Left lung (tissue), 14 donors: ENCODE measurements at regions of chr2 and their contacts with region 1.

Region 1: GRCh38 chr2:69306822-69307578 is 80.0 kb downstream of the GFPT1 start:
- DNase-seq: peak; percentile 81 to 93 (median 89)
- ATAC-seq: peak; percentile 84
- H3K4me3 ChIP-seq: peak overlapping the region; percentile 55 to 61
- H3K27ac ChIP-seq: peak overlapping the region; percentile 66 to 83
- H3K4me1 ChIP-seq: peaks cover 21 to 39% of the 10 kb centered on the region in 2 donors
- H3K27me3 ChIP-seq: peaks cover 0 to 23% of the 10 kb centered on the region in 2 donors
- CTCF ChIP-seq: peak; percentile 83 to 88

Region 2: DNA sequence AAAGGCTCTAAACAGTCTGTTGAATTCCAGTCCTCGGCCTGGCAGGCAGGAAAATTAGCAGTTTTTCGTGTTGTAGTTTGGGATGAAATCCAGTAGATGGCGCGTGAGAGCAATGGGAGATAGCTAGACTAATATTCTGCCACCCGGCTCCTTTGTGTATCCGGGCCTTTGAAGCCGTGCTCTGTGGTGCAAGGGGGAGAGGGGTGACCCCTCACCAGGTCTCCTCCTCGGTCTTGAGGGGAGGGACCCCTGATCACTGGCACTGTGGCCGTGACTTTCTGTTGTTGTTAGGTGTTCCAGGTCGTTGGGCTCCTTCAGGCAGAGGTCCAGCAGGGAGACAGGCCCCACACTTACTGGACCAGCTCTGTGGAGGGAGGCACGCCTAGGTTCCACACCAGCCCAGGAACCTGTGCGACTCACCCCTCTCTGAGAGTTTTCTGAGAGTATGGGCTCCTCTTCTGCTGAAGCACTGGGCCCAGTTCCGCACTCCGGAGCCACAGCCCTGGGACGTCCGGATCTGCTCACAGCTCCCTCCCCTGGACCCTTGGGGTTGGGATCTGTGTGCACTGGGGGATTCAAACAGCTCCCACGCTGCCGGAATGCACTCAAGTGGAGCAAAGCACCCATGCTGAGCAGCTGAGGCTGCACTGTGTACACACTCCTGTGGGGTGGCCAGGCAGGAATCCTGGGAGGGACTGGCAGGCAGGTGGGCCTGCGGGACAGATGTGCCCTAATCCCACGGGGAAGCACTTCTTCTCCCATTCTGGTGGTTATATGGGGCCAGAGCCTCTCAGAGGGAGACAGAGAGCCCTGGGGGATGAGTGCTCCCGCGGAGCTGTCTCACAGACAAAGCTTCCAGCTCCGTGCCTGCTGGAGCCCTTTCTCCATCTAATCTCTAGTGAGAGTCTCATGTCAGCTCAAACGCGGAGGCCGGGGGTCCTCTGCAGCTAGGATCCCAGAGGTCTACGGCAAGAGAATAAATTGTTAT is 363.1 kb before region 1 on chr2:
- intact Hi-C with region 1: loop called in 1 of 2 experiments (anchors 10 kb)
- DNase-seq: peak in 2 of 4 donors; percentile 69 to 77
- ATAC-seq: peak; percentile 87
- H3K4me3 ChIP-seq: no peak overlapping the region
- H3K27ac ChIP-seq: no peak overlapping the region
- H3K4me1 ChIP-seq: no peaks in the 10 kb centered on the region
- H3K27me3 ChIP-seq: no peaks in the 10 kb centered on the region
- CTCF ChIP-seq: peak; percentile 69 to 83

Region 3: DNA sequence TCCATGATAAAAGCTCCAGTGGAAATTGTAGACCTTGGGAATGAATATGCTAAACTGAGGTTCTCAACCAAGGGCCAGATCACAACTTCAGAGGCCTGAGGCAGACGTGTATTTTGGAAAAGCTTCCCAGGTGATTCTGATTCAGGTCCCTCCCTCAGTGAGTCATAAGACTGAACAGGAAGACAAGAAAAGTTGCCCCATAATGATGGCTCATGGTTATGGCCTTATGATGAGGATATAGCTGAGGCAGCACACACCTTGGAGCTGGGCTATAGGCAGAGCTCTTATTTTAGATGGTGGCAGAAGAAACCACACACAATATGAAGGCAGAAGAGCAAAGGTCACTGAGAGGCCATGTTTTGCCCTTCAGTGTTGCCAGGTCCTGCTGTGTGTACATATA is 284.5 kb before region 1 on chr2:
- intact Hi-C with region 1: loop called in 1 of 2 experiments (anchors 5 kb)
- DNase-seq: no peak
- ATAC-seq: no peak
- H3K4me3 ChIP-seq: no peak overlapping the region
- H3K27ac ChIP-seq: no peak overlapping the region
- H3K4me1 ChIP-seq: no peaks in the 10 kb centered on the region
- H3K27me3 ChIP-seq: peaks cover 0 to under 1% of the 10 kb centered on the region in 2 donors
- CTCF ChIP-seq: no peak

Region 4: DNA sequence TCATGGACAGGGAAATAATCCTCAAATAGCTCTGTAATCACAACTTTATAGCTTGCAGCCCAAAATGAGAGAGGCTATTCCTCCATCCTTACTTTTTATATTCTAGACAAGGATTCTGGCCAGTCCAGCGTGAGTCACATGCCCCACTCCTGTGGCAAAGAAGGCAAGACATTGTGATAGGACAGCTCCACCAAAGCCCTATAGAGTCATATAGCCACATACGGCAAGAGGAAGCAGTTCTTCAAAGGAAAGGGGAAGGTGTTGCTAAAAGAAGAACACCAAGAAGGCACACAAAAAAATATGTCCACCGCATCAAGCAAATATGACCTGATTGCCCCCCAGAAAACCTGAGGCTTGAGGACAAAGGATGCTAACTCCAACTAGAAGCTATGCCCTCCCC is 83.5 kb after region 1 on chr2:
- intact Hi-C with region 1: no loop called
- DNase-seq: no peak
- ATAC-seq: no peak
- H3K4me3 ChIP-seq: no peak overlapping the region
- H3K27ac ChIP-seq: no peak overlapping the region
- H3K4me1 ChIP-seq: peaks cover 0 to 26% of the 10 kb centered on the region in 2 donors
- H3K27me3 ChIP-seq: no peaks in the 10 kb centered on the region
- CTCF ChIP-seq: no peak

Region 5: DNA sequence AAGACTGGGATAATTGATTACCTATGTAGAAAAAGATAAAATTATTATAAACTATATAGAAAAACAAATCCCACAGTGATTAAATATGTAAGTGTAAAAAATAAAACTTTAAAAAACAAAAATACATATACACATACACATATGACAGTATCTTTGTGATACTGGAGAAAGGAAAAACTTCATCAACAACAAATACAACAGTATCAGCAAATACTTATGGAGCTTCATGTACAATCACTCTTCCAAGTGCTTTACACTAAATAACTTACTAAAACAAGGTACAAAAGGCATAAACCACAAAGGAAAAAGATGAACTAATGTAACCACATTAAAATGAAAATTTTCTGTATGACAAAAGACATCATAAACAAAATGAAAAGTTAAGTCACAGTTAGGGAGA is 104.1 kb after region 1 on chr2:
- intact Hi-C with region 1: no loop called
- DNase-seq: no peak
- ATAC-seq: no peak
- H3K4me3 ChIP-seq: no peak overlapping the region
- H3K27ac ChIP-seq: no peak overlapping the region
- H3K4me1 ChIP-seq: no peaks in the 10 kb centered on the region
- H3K27me3 ChIP-seq: no peaks in the 10 kb centered on the region
- CTCF ChIP-seq: no peak

Region 6: DNA sequence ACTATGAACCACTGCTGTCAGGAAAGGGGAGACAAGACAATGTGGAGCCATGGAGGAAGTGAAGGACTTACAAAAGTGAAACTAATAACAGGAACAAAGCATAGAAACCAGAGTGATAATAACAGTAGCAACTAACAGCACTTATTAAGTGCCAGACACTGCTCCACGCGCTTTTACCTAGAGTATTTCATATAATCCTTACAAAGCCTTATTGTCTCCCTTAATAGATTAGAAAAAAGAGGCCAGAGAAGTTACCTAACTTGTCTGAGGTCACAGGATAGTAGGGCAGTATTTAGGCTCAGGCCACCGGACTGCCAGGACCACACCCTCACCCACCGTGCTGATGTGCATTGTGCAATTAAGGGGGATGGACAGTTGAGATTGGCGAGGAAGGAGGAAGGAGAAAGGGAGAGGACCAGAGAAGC is 228.8 kb after region 1 on chr2:
- intact Hi-C with region 1: no loop called
- DNase-seq: no peak
- ATAC-seq: peak; percentile 51
- H3K4me3 ChIP-seq: no peak overlapping the region
- H3K27ac ChIP-seq: peak overlapping the region in 1 of 2 donors; percentile 52
- H3K4me1 ChIP-seq: peaks cover 0 to 30% of the 10 kb centered on the region in 2 donors
- H3K27me3 ChIP-seq: no peaks in the 10 kb centered on the region
- CTCF ChIP-seq: no peak

Region 7: DNA sequence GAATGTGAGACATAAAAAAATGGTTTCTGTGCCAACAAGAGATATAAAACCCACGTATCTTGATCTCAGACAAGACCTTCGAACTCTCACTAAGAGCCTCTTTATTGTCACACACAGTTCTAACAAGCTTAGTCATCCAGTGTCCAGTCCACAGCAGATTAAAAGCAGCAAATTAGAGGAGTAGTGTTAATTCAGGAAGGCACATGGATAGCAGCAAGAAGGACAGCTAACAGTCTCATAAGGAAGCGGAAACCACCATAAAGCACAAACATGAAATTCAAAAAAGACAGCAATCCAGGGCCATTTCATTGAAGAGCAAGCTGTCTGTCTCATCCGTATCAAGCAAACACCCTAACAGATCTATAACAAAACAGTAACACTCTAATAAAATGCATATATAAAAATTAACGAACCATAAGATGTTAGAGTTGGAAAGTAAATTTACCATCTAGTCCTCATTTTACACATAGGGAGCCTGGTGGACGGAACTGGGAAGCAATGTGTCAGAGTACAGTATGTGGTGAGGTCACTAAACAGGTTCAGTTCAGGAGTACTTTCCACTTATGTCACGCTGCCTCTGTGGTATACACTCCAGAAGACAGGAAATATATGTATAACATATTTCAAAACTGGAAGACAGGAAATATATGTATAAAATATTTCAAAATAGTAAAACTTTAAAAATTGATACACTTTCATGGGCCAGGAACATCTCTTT is 318.2 kb after region 1 on chr2:
- intact Hi-C with region 1: no loop called
- DNase-seq: no peak
- ATAC-seq: no peak
- H3K4me3 ChIP-seq: no peak overlapping the region
- H3K27ac ChIP-seq: no peak overlapping the region
- H3K4me1 ChIP-seq: peaks cover 4 to 63% of the 10 kb centered on the region in 2 donors
- H3K27me3 ChIP-seq: no peaks in the 10 kb centered on the region
- CTCF ChIP-seq: no peak